Endothelial cell of umbilical vein (primary cell): ENCODE measurements at regions of chr11 and their contacts with region 1.

Region 1: DNA sequence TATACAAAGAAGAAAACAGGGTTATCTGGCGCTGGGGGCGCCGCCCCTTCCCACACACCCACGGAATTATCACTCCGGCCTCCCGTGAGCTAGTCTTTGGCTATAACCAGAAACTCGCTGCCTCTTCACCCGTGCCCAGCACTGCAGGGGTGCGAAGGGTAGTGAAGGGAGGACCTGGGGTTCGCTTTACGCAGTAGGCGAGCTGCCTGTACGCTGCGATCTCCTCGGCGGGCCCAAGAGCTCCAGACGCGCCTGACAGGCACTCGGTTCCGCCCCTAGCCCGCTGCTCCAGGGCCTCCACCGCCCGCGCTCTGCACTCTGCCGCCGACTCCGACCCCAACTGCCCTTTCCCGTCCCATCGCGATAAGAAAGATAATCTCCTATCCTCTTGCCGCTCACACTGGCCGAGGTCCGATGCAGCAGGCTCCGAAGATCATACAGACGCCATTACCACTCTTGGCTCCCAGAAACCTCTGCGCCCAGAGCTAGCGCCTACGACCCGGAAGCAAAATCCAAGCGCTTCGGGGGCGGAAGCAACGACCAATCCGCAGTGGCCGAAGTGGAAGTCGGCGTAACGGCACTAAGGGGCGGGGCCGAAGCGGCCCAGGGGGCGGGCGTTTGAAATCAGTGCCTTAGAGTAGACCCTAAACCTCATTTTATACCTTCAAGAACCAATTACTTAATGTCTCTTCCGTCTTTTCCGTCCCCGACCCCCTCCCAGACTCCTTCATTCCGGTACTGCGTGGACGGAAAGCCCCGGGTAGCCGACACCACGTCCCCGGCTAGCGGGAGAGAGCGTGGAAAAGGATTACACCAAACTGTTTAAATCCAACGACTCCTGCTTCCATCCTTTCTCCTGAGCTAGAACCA is at the starts of genes CWC15 and KDM4D:
- DNase-seq: peak; percentile 95
- H3K4me3 ChIP-seq: peak within 1 kb of the TSS; percentile 77 to 94 (median 92)
- H3K27ac ChIP-seq: peak within 1 kb of the TSS; percentile 76
- H3K4me1 ChIP-seq: peaks cover 9% of the 10 kb centered on the region
- H3K27me3 ChIP-seq: no peaks in the 10 kb centered on the region
- CTCF ChIP-seq: no peak
- POLR2A ChIP-seq: peak; percentile 91
- total RNA-seq, gene CWC15: 72.0 and 75.6 TPM in 2 replicates
- total RNA-seq, gene KDM4D: 1.0 and 1.3 TPM in 2 replicates

Region 2: DNA sequence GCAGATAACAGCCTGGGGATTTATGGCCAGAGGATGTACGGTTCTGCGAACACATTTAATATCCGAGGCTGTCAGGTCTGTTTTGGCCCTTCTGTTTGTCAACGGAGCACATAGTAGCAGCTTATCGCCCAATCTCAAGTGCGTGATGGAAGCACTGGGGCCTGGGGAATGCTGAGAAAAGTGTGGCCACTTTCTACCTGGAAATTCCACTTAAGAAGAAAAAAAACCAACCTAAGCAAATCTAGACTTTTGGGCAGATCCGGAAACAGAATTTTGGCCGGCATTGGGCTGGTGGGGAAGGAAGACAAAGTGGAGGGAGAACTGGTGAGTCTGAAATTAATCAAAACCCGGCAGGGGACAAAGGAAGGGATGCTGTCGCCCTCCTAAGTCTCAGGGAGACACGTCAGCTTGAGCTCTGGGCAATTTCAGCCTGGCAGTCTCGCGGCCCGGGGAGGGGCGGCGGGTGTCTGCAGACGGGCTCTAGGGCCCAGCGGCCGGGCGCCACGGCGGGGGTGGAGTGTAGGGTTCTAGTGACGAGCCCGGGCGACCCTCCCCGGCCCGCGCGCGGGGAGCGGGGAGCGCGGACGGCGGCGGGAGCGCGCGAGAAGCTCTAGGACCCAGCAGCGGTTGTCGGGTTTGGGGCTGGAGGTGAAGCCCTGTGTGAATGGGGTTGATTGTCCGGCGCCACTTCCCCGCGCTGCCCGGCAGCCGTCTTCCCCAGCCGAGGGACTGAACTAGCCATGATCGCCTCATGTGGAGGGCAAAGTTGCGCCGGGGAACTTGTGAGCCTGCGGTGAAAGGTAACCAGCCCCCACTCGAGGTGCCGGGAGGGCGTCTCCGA is 205.4 kb before region 1 on chr11 and contains the start of gene AMOTL1:
- CTCF ChIA-PET with region 1: interaction called, 5 read pairs
- POLR2A ChIA-PET with region 1: no interaction called
- dilution Hi-C with region 1: no loop called
- intact Hi-C with region 1: loop called (anchors 5 kb)
- DNase-seq: peak; percentile 85
- H3K4me3 ChIP-seq: peak within 1 kb of the TSS; percentile 55 to 76 (median 73)
- H3K27ac ChIP-seq: peak within 1 kb of the TSS; percentile 85
- H3K4me1 ChIP-seq: peaks cover 19% of the 10 kb centered on the region
- H3K27me3 ChIP-seq: no peaks in the 10 kb centered on the region
- CTCF ChIP-seq: no peak
- POLR2A ChIP-seq: peak; percentile 77
- total RNA-seq, gene AMOTL1: 37.8 and 41.8 TPM in 2 replicates

Region 3: GRCh38 chr11:94876645-94877442 is 96.5 kb before region 1 on chr11:
- CTCF ChIA-PET with region 1: interaction called, 8 read pairs
- POLR2A ChIA-PET with region 1: no interaction called
- dilution Hi-C with region 1: no loop called
- intact Hi-C with region 1: loop called (anchors 2 kb)
- DNase-seq: peak; percentile 94
- H3K4me3 ChIP-seq: no peak overlapping the region
- H3K27ac ChIP-seq: peak overlapping the region; percentile 75
- H3K4me1 ChIP-seq: peaks cover 14% of the 10 kb centered on the region
- H3K27me3 ChIP-seq: no peaks in the 10 kb centered on the region
- CTCF ChIP-seq: peak; percentile 28 to 32
- POLR2A ChIP-seq: no peak

Region 4: DNA sequence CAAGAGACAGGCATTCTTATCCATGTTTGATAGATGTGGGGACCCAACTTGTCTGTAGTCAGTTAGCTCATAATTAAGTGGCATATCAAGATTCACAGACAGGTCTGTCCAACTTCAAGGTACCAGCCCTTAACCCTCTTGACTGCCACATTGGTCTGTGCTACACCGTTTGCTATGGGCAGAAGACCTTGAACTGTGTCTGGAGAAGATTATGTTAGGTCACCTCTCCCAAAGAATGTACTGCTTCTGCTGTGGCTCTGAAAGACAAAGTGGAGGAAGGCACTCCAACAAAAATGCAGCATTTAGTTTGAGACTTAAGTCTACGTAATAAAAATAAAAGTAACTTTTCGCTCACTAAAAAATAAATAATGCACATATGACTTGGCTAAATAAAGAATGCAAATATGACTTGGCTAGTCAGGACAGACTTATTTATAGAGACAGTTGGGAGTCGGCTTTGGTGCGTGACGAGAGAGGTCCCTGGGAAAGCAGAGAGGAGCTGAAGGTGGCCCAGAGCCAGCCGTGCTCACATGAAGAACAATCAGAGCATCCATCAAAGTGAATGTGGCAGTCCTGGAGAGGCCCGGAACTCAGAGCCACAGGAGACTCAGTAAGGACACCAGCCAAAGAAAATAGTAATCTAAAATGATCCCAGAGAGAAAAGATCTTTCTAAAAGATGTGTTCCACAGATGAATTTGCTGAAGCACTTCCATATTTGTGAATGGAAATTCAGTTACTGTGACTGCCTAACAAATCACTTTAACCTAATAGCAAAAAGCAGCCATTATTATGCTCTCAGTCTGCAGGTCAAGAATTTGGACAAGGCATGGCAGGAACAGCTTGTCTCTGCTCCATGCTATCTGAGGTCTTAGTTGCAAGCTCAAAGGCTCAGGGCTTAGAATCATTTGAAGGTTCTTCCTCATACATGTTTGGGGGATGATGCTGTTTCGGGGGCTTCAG is 35.0 kb before region 1 on chr11:
- CTCF ChIA-PET with region 1: interaction called, 18 read pairs
- POLR2A ChIA-PET with region 1: interaction called, 3 read pairs
- dilution Hi-C with region 1: no loop called
- intact Hi-C with region 1: loop called (anchors 2 kb)
- DNase-seq: peak; percentile 90
- H3K4me3 ChIP-seq: no peak overlapping the region
- H3K27ac ChIP-seq: peak overlapping the region; percentile 37
- H3K4me1 ChIP-seq: peaks cover 41% of the 10 kb centered on the region
- H3K27me3 ChIP-seq: no peaks in the 10 kb centered on the region
- CTCF ChIP-seq: no peak
- POLR2A ChIP-seq: no peak

Region 5: DNA sequence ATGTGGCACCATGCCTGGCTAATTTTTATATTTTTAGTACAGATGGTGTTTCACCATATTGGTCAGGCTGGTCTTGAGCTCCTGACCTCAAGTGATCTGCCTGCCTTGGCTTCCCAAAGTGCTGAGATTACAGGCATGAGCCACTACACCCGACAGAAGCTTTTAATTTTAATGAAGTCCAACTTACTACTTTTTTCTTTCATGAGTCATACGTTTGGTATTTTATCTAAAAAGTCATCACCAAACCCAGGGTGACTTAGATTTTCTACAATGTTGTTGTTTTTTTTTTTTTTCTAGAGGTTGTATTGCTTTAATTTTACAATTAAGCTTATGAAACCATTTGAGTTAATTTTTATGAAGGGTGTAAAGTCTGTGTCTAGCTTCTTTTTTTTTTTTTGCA is 1451.4 kb after region 1 on chr11:
- CTCF ChIA-PET with region 1: interaction called, 6 read pairs
- POLR2A ChIA-PET with region 1: no interaction called
- dilution Hi-C with region 1: no loop called
- intact Hi-C with region 1: loop called (anchors 5 kb)
- DNase-seq: peak; percentile 51
- H3K4me3 ChIP-seq: no peak overlapping the region
- H3K27ac ChIP-seq: no peak overlapping the region
- H3K4me1 ChIP-seq: peaks cover 2% of the 10 kb centered on the region
- H3K27me3 ChIP-seq: peaks cover 0 to 17% of the 10 kb centered on the region in 2 experiments
- CTCF ChIP-seq: no peak
- POLR2A ChIP-seq: no peak